Esophagus muscularis mucosa (tissue), 4 donors: ENCODE measurements at regions of chr19 and their contacts with region 1.

Region 1: DNA sequence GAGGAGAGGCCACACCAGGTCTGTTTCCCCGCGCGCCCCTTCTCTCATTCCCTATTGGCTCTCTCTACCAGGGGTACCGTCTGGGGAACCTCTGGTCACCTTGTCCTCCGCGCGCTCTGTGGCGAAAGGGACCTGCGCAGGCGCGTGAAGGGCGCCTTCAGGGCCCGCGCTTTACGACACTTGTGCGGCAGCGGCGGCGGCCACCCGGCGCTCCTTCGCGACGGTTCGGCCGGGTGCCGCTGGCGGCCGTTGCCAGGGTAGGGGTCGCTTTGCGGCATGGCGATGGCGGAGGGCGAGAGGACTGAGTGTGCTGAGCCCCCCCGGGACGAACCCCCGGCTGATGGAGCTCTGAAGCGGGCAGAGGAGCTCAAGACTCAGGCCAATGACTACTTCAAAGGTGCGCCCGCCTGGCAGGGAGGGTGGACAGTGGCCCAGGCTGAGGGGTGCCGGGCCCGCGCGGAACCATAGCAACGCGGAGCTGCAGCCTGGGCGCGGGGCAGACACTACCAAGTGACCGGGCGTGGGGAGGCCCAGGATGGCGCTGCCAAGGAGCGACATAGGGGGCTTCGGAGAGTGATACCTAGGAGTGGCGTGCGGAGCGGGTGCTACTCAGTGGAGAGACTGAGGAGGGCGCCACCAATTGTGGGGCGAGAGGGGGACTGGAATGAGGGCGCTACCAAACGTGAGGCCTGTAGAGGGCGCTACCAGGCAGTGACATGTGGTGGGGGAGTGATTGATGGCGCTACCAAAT is at the start of gene PPP5C:
- DNase-seq: peak; percentile 96
- H3K4me3 ChIP-seq: peak within 1 kb of the TSS; percentile 69 to 98 (median 96)
- H3K27ac ChIP-seq: peak within 1 kb of the TSS; percentile 82 to 87 (median 84)
- H3K4me1 ChIP-seq: peaks cover 52 to 58% (median 57%) of the 10 kb centered on the region in 4 donors
- H3K27me3 ChIP-seq: no peaks in the 10 kb centered on the region
- CTCF ChIP-seq: peak; percentile 71 to 74 (median 72)
- EP300 ChIP-seq: no peak
- POLR2A ChIP-seq: peak; percentile 62
- total RNA-seq, gene PPP5C: 39.9 to 74.7 (median 61.9) TPM

Region 2: DNA sequence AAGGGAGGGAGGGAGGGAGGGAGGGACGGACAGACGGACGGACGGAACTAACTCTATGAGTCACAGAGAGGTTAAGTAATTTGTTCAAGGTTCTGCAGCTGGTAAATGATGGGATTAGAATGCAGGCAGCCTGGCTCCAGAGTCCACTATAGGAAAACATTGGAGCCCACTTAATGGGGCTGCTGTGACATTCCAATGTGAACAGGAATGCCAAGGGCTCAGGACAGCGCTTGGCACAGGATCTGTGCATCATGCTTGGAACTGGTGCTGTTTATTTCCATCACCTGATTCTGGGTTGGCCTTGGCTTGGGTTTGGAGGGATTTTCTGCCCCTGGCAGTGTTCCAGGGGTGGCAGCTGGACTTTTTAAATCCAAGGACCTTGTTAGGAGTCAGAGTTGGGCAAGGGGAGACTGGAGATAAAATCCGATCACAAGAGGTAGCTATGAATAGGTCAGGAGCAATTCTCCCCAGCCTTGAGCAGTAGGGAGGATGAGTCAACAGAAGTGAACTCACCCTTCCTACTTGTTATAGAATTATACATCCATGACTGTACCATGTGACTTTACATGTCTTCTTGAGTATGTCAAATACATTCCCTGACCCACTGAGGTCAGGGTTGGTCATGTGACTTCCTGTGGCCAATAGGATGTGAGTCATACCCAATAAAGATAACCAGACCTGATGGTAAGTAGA is 58.0 kb before region 1 on chr19:
- intact Hi-C with region 1: loop called (anchors 10 kb)
- DNase-seq: no peak
- H3K4me3 ChIP-seq: no peak overlapping the region
- H3K27ac ChIP-seq: peak overlapping the region; percentile 65 to 77 (median 68)
- H3K4me1 ChIP-seq: peaks cover 4 to 21% (median 9%) of the 10 kb centered on the region in 4 donors
- H3K27me3 ChIP-seq: no peaks in the 10 kb centered on the region
- CTCF ChIP-seq: no peak
- EP300 ChIP-seq: no peak
- POLR2A ChIP-seq: no peak

Region 3: DNA sequence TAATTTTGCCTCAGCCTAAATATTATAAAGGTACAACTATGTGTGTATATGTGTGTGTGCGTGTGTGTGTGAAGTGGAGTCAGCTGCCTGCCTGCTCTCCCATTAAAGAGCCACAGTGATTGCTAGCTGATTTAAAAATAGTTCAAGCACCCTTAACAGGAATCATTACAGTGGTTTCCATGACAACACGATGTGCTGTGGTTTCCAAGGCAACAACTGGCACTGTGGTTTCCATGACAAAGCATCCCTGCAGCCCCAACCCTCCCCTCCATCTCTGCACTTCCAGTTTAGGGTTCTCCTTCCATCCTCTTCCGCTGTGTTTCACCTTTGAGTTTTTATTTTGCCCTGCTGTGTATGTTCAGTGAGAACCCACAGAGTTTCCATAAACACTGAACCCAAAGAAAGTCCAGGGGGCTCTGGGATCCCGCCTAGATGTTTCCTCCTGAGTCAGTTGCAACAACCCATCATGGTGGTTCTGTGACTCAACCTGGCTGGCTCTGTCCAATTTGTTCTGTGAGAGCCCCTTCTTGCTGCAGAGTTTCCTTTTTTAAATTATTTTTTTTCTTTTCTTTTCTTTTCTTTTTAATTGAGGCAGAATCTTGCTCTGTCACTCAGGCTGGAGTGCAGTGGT is 131.5 kb after region 1 on chr19:
- intact Hi-C with region 1: no loop called
- DNase-seq: no peak
- H3K4me3 ChIP-seq: no peak overlapping the region
- H3K27ac ChIP-seq: no peak overlapping the region
- H3K4me1 ChIP-seq: peaks cover 0 to 19% (median 17%) of the 10 kb centered on the region in 4 donors
- H3K27me3 ChIP-seq: peaks cover 0 to 32% (median 0%) of the 10 kb centered on the region in 4 donors
- CTCF ChIP-seq: no peak
- EP300 ChIP-seq: no peak
- POLR2A ChIP-seq: no peak